Tibial artery (tissue), 4 donors: ENCODE measurements at regions of chr1 and their contacts with region 1.

Region 1: DNA sequence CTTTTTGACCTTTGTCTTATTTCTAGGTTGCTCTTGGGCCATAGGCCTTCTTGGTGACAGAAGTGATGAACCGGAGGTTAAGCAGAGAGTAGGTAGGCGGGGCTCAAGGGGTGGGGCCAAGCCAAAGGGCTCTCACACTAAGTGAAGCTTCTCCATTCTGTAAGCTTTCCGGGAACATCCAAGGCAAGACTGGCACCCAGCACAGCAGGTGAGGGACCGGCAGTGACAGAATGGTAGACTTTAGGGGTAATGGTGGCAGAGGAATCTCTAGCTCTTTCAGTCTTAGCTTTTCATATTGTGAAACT is at the start of gene TNFAIP8L2:
- DNase-seq: peak in 1 of 2 donors; percentile 57
- H3K4me3 ChIP-seq: peak within 1 kb of the TSS; percentile 5 to 6
- H3K27ac ChIP-seq: peak within 1 kb of the TSS in 1 of 2 donors; percentile 4
- H3K4me1 ChIP-seq: peaks cover 0 to 9% (median 0%) of the 10 kb centered on the region in 4 donors
- H3K27me3 ChIP-seq: no peaks in the 10 kb centered on the region
- CTCF ChIP-seq: no peak

Region 2: GRCh38 chr1:151024540-151025146 is 131.8 kb before region 1 on chr1:
- intact Hi-C with region 1: loop called (anchors 10 kb)
- DNase-seq: peak; percentile 88 to 89
- H3K4me3 ChIP-seq: no peak overlapping the region
- H3K27ac ChIP-seq: peak overlapping the region; percentile 21 to 28
- H3K4me1 ChIP-seq: peaks cover 0 to 7% (median 0%) of the 10 kb centered on the region in 4 donors
- H3K27me3 ChIP-seq: no peaks in the 10 kb centered on the region
- CTCF ChIP-seq: peak; percentile 66 to 75

Region 3: DNA sequence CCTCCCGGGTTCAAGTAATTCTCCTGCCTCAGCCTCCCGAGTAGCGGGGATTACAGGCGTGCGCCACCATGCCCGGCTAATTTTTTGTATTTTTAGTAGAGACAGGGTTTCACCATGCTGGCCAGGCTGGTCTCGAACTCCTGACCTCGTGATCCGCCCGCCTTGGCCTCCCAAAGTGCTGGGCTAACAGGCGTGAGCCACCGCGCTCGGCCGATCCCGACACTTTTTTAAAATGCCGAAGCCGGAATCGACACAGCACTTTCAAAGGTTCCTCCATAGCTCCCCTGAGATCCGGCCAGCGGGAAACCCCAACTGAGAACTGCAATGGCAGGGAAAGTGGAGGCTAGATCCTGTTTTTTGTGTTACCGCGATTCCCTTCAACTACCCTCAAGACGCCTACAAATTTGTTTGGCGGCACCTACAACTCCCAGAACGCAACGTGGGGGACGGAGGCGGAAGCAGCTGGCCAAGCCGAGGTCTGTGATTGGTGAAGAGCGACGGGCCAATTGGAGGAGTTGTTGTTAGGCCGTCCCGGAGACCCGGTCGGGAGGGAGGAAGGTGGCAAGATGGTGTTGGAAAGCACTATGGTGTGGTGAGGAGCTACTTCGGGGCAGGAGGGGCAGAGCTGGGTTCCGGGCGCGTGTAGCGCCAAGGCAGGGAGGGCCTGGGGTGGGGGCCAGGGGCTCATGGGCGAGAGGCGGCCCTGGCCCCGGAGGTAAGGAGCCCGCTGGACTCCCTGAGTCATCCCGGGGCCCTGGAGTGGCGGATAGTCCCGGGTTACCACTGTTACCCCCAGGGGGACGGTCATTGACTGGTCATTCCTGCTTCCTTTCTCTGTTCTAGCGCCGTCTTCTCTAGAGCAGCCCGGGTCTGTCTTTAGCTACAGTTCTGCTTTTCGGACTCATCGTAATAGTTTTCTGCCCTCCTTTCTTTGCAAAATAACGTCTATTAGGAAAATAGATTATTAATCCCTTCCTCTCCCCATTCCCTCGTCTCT is 98.0 kb after region 1 on chr1 and contains the start of gene PSMD4:
- intact Hi-C with region 1: no loop called
- DNase-seq: peak; percentile 95 to 97
- H3K4me3 ChIP-seq: peak within 1 kb of the TSS; percentile 82 to 99
- H3K27ac ChIP-seq: peak within 1 kb of the TSS; percentile 89 to 94
- H3K4me1 ChIP-seq: peaks cover 0 to 22% (median 15%) of the 10 kb centered on the region in 4 donors
- H3K27me3 ChIP-seq: no peaks in the 10 kb centered on the region
- CTCF ChIP-seq: peak in 1 of 2 experiments; percentile 5

Region 4: GRCh38 chr1:151352006-151352689 is 195.7 kb after region 1 on chr1:
- intact Hi-C with region 1: no loop called
- DNase-seq: no peak
- H3K4me3 ChIP-seq: no peak overlapping the region
- H3K27ac ChIP-seq: no peak overlapping the region
- H3K4me1 ChIP-seq: peaks cover 0 to 7% (median 0%) of the 10 kb centered on the region in 4 donors
- H3K27me3 ChIP-seq: no peaks in the 10 kb centered on the region
- CTCF ChIP-seq: no peak

Region 5: DNA sequence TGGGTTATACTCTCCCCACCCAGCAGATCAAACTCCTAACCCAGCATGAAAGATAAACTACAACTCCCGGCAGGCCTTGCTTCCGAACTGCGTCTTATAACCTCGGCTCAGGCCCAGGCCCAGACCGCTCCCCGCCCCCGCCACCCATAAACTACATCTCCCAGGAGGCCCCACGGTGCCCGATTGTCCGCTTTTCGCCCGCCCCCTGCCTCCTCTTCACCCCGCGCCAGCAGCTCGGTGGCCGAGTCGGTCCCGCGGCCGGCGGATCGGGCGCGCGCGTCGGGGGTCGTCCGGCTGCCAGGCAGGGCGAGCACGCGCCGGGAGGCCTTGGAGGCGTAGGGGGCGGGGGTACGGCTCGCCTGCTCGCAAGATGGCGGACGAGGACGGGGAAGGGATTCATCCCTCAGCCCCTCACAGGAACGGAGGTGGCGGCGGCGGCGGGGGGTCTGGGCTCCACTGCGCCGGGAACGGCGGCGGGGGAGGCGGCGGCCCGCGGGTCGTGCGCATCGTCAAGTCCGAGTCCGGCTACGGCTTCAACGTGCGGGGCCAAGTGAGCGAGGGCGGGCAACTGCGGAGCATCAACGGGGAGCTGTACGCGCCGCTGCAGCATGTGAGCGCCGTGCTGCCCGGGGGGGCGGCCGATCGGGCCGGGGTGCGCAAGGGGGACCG is 455.5 kb after region 1 on chr1 and contains the start of gene SNX27:
- intact Hi-C with region 1: no loop called
- DNase-seq: peak; percentile 95 to 96
- H3K4me3 ChIP-seq: peak within 1 kb of the TSS; percentile 99
- H3K27ac ChIP-seq: peak within 1 kb of the TSS; percentile 97 to 98
- H3K4me1 ChIP-seq: peaks cover 0 to 40% (median 7%) of the 10 kb centered on the region in 4 donors
- H3K27me3 ChIP-seq: peaks cover 0 to 4% of the 10 kb centered on the region in 2 donors
- CTCF ChIP-seq: no peak